ENCODE measurements at regions of chr12 and their contacts with region 1.

Region 1: DNA sequence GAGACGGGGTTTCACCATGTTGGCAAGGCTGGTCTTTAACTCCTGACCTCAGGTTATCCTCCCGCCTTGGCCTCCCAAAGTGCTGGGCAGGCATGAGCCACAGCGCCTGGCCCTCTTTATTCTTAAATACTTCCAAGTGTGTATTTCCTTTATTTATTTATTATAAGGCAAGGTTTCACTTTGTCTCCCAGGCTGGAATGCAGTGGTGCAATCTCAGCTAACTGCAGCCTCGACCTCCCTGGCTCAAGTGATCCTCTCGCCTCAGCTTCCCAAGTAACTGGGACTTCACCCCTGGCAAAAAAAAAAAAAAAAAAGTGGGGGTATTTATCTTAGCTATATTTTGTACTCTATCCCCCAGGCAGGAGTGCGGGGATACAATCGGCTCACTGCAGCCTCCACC is 6.8 kb downstream of the FAM216A start:
- DNase-seq: no peak
- H3K4me3 ChIP-seq: no peak overlapping the region
- H3K27ac ChIP-seq: no peak overlapping the region
- H3K4me1 ChIP-seq: no peaks in the 10 kb centered on the region
- H3K27me3 ChIP-seq: no peaks in the 10 kb centered on the region
- CTCF ChIP-seq: no peak

Region 2: GRCh38 chr12:110449799-110450497 is 25.5 kb before region 1 on chr12 and contains the start of gene ARPC3:
- CTCF ChIA-PET with region 1: no interaction called
- POLR2A ChIA-PET with region 1: no interaction called
- intact Hi-C with region 1: no loop called
- DNase-seq: peak; percentile 90 to 93
- H3K4me3 ChIP-seq: peak within 1 kb of the TSS; percentile 94
- H3K27ac ChIP-seq: peak within 1 kb of the TSS; percentile 61
- H3K4me1 ChIP-seq: 0 out of 2 replicates have a peak, but pooled peaks cover 4% of the 10 kb centered on the region
- H3K27me3 ChIP-seq: no peaks in the 10 kb centered on the region
- CTCF ChIP-seq: peak; percentile 77
- total RNA-seq, gene ARPC3: 167 and 229 TPM in 2 replicates

Region 3: DNA sequence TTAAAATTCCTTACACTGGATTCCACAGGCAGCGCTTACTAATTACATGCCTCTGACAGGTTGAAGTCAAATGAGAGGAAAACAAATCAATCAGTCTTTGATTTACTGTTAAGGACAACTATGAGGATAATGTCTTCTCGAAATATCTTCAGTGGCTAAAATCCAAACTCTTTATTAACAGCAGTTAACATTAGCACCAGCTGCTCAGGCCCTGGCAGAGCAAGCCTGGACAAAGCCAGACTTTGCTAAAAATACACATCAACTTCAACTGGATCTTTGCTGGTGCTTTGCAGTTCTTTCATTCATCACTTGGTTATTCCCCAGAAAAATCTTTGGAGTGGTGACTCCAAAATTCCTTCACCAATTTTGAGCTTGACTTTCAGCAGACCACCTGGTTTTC is 1808.1 kb after region 1 on chr12:
- CTCF ChIA-PET with region 1: interaction called, 22 read pairs
- POLR2A ChIA-PET with region 1: no interaction called
- intact Hi-C with region 1: no loop called
- DNase-seq: no peak
- H3K4me3 ChIP-seq: no peak overlapping the region
- H3K27ac ChIP-seq: no peak overlapping the region
- H3K4me1 ChIP-seq: no peaks in the 10 kb centered on the region
- H3K27me3 ChIP-seq: no peaks in the 10 kb centered on the region
- CTCF ChIP-seq: no peak